ENCODE measurements at regions of chr6 and their contacts with region 1.

Region 1: GRCh38 chr6:73515204-73515655 is 5.6 kb downstream of the EEF1A1 start:
- DNase-seq: peak; percentile 41
- ATAC-seq: peak; percentile 17
- H3K4me3 Mint-ChIP-seq: peak overlapping the region; percentile 97
- H3K27ac Mint-ChIP-seq: peak overlapping the region; percentile 85
- H3K4me1 Mint-ChIP-seq: peaks cover 28% of the 10 kb centered on the region
- H3K27me3 Mint-ChIP-seq: no peaks in the 10 kb centered on the region
- CTCF ChIP-seq: no peak

Region 2: GRCh38 chr6:73109659-73110058 is 405.6 kb before region 1 on chr6:
- CTCF ChIA-PET with region 1: no interaction called
- POLR2A ChIA-PET with region 1: no interaction called
- intact Hi-C with region 1: no loop called
- DNase-seq: no peak
- ATAC-seq: no peak
- H3K4me3 Mint-ChIP-seq: no peak overlapping the region
- H3K27ac Mint-ChIP-seq: no peak overlapping the region
- H3K4me1 Mint-ChIP-seq: peaks cover 4% of the 10 kb centered on the region
- H3K27me3 Mint-ChIP-seq: no peaks in the 10 kb centered on the region
- CTCF ChIP-seq: no peak

Region 3: DNA sequence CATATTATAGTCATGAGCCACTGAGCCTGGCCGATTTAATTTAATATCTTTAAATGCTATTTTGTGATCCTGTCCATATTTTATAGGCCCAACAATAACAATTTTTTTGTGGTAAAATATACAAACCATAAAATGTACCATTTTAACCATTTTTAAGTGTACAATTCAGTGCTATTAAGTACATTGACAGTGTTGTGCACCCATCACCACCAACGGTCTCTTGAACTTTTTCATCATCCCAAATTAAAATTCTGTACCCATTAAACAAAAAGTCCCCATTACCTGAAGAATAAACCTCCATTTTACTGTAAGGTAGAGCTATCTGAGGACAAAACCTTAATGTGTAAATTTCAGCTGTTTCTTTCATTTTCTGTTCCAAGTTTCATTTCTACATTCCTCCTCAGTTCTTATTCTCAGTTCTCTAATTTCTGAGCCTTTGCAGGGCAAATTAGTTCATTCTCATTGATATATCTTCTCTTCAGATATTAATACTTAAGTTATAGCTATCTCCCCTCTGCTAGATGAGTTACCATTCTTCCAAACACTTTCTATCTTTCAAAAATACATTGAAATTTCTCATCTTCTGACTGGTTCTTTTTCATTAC is 43.4 kb before region 1 on chr6:
- CTCF ChIA-PET with region 1: interaction called, 3 read pairs
- POLR2A ChIA-PET with region 1: interaction called, 19 read pairs
- intact Hi-C with region 1: no loop called
- DNase-seq: no peak
- ATAC-seq: no peak
- H3K4me3 Mint-ChIP-seq: no peak overlapping the region
- H3K27ac Mint-ChIP-seq: peak overlapping the region; percentile 76
- H3K4me1 Mint-ChIP-seq: peaks cover 17% of the 10 kb centered on the region
- H3K27me3 Mint-ChIP-seq: no peaks in the 10 kb centered on the region
- CTCF ChIP-seq: no peak

Region 4: DNA sequence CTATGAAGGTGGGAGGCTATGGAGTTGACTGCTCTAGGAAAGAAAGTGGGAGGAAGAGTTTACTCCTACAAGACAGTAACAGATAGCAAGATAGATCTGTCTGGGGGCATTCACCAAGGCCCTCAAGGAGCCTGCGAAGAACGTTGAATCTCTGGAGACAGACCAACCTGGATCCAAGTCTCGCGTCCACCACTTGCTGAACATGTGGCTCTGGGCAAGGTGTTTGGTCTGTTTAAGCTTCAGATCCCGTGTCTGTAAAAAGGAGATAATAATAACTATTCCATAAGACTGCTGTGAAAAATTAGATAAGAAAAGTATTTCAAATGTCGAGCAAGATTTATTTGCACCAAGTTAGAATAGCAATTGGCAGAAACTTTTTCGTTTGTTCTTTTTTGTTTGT is 13.7 kb after region 1 on chr6:
- CTCF ChIA-PET with region 1: interaction called, 4 read pairs
- POLR2A ChIA-PET with region 1: interaction called, 91 read pairs
- intact Hi-C with region 1: no loop called
- DNase-seq: no peak
- ATAC-seq: no peak
- H3K4me3 Mint-ChIP-seq: no peak overlapping the region
- H3K27ac Mint-ChIP-seq: no peak overlapping the region
- H3K4me1 Mint-ChIP-seq: peaks cover 7% of the 10 kb centered on the region
- H3K27me3 Mint-ChIP-seq: no peaks in the 10 kb centered on the region
- CTCF ChIP-seq: no peak

Region 5: DNA sequence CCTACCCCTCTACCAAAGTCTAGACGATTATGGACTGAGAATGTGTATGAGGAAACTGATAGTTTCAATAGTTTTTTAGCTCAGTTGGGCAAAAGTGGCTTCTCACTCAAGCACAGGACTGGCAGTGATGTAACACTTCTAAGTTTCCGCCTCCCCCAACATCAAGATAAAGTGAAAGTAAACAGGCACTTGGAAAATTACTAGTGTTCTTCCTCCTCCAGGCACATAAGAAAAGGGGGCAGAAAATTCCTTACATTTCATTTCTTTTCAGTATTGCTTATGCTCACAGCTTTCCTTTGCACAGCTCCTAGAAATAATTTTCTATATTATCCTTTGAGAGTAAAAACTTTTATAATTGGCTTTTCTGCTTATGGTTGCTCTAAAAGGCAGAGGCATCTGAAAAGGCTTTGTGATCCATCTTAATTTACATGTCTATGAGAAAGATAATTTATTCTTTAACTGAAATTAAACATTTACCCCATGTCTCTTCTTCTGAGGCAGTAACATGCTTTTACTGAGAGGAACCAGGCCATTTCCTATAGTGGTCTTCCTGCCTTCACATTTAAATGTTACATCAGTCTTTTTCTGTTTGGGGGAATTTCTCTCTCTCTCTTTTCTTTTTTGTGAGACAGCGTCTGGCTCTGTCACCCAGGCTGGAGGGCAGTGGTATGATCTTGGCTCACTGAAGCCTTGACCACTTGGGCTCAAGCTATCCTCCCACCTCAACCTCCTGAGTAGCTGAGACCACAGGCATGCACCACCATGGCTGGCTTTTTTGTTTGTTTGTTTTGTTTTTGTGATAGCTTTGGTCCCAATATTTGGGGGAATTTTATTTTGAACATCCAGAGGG is 70.6 kb after region 1 on chr6:
- CTCF ChIA-PET with region 1: no interaction called
- POLR2A ChIA-PET with region 1: interaction called, 159 read pairs
- intact Hi-C with region 1: no loop called
- DNase-seq: peak; percentile 69
- ATAC-seq: peak; percentile 77
- H3K4me3 Mint-ChIP-seq: peak overlapping the region; percentile 90
- H3K27ac Mint-ChIP-seq: peak overlapping the region; percentile 100
- H3K4me1 Mint-ChIP-seq: peaks cover 29% of the 10 kb centered on the region
- H3K27me3 Mint-ChIP-seq: no peaks in the 10 kb centered on the region
- CTCF ChIP-seq: no peak

Region 6: GRCh38 chr6:73631849-73632248 is 116.6 kb after region 1 on chr6:
- CTCF ChIA-PET with region 1: interaction called, 3 read pairs
- POLR2A ChIA-PET with region 1: interaction called, 14 read pairs
- intact Hi-C with region 1: no loop called
- DNase-seq: no peak
- ATAC-seq: no peak
- H3K4me3 Mint-ChIP-seq: no peak overlapping the region
- H3K27ac Mint-ChIP-seq: no peak overlapping the region
- H3K4me1 Mint-ChIP-seq: no peaks in the 10 kb centered on the region
- H3K27me3 Mint-ChIP-seq: no peaks in the 10 kb centered on the region
- CTCF ChIP-seq: no peak